WTC11 (cell line): ENCODE measurements at regions of chr17 and their contacts with region 1.

Region 1: GRCh38 chr17:80649678-80650672 is 105.3 kb downstream of the RPTOR start:
- DNase-seq: peak; percentile 77
- ATAC-seq: peak; percentile 89
- H3K4me3 Mint-ChIP-seq: no peak overlapping the region
- H3K27ac Mint-ChIP-seq: peak overlapping the region; percentile 20
- H3K4me1 Mint-ChIP-seq: peaks cover 43% of the 10 kb centered on the region
- H3K27me3 Mint-ChIP-seq: no peaks in the 10 kb centered on the region
- CTCF ChIP-seq: peak; percentile 19; the same call in 1 of the 2 replicates

Region 2: GRCh38 chr17:80586846-80587228 is 63.1 kb before region 1 on chr17:
- CTCF ChIA-PET with region 1: no interaction called
- POLR2A ChIA-PET with region 1: no interaction called
- DNase-seq: no peak
- ATAC-seq: no peak
- H3K4me3 Mint-ChIP-seq: no peak overlapping the region
- H3K27ac Mint-ChIP-seq: peak overlapping the region; percentile 34
- H3K4me1 Mint-ChIP-seq: peaks cover 18% of the 10 kb centered on the region
- H3K27me3 Mint-ChIP-seq: no peaks in the 10 kb centered on the region
- CTCF ChIP-seq: no peak

Region 3: GRCh38 chr17:80632046-80632581 is 17.9 kb before region 1 on chr17:
- CTCF ChIA-PET with region 1: interaction called, 34 read pairs
- POLR2A ChIA-PET with region 1: no interaction called
- DNase-seq: no peak
- ATAC-seq: no peak
- H3K4me3 Mint-ChIP-seq: no peak overlapping the region
- H3K27ac Mint-ChIP-seq: peak overlapping the region; percentile 69; the same call in 1 of the 2 replicates
- H3K4me1 Mint-ChIP-seq: peaks cover 14% of the 10 kb centered on the region
- H3K27me3 Mint-ChIP-seq: no peaks in the 10 kb centered on the region
- CTCF ChIP-seq: no peak

Region 4: DNA sequence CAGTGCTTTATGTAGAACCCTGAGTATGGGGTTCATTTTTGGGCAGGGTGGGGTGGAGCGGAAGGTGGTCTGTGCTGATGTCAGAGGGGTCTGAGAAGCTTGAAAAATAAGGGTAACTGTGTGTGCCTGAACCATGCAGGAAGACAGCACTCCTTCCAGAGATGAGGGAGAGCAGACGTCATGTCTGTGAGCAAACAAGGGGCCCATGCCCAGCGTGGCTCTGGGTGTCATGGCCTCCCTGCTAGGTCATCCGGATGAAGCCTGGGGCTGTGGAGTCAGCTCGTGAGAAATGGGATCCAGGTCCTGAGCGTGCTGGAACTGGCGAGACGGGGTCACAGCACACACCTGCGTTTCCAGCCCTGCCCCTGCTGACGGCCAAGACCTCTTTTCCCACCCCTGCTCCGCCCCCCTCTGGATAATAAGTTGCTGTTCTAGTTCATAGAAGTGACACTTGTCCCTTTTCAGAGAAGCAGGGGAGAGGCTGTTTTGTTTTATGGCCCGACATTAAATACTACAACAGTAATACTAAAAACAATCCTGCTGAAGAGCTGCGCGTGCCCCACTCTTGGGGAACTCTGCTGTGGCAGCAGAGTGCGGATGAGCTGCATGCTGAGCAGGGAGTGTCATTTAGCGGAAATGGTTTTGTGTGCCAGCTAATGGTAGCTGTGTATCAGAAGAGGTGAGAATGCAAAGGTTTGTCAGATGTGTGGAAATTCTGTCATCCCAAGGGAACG is 12.8 kb before region 1 on chr17:
- CTCF ChIA-PET with region 1: interaction called, 34 read pairs
- POLR2A ChIA-PET with region 1: no interaction called
- DNase-seq: no peak
- ATAC-seq: no peak
- H3K4me3 Mint-ChIP-seq: no peak overlapping the region
- H3K27ac Mint-ChIP-seq: peak overlapping the region; percentile 47
- H3K4me1 Mint-ChIP-seq: peaks cover 16% of the 10 kb centered on the region
- H3K27me3 Mint-ChIP-seq: no peaks in the 10 kb centered on the region
- CTCF ChIP-seq: no peak

Region 5: DNA sequence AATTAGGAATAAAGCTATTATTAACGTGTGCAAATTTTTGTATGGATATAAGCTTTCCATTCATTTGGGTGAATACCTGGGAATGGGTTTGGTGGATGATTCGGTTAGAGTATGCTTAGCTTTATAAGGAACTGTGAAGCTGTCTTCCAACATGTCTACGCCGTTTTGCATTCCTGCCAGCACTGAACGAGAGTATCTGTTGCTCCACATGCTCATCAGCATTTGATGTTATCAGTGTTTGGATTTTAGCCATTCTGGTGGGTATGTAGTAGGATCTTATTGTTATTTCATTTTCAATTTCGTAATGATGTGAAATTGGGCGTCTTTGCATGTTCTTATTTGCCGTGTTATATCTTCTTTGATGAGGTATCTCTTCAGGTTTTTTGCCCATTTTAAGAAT is 62.6 kb after region 1 on chr17:
- CTCF ChIA-PET with region 1: no interaction called
- POLR2A ChIA-PET with region 1: no interaction called
- DNase-seq: no peak
- ATAC-seq: no peak
- H3K4me3 Mint-ChIP-seq: no peak overlapping the region
- H3K27ac Mint-ChIP-seq: peak overlapping the region; percentile 48
- H3K4me1 Mint-ChIP-seq: peaks cover 38% of the 10 kb centered on the region
- H3K27me3 Mint-ChIP-seq: no peaks in the 10 kb centered on the region
- CTCF ChIP-seq: no peak